Panc1 (cell line): ENCODE measurements at regions of chr16 and their contacts with region 1.

Region 1: DNA sequence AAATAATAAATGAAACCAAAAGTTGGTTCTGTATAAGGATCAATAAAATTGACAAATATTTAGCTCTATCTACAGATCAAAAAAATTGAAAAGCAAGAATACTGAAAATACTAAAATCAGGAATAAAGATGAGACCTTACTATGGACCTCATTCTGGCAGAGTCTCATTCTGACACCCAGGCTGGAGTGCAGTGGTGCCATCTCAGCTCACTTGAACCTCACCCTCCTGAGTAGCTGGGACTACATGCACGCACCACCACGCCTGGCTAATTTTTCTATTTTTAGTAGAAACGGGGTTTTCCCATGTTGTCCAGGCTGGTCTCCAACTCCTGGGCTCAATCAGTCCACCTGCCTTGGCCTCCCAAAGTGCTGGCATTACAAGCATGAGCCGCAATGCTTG is 22.0 kb upstream of the KREMEN2 start:
- DNase-seq: no peak
- ATAC-seq: no peak
- H3K4me3 ChIP-seq: no peak overlapping the region
- H3K27ac ChIP-seq: no peak overlapping the region
- H3K4me1 ChIP-seq: no peaks in the 10 kb centered on the region
- H3K27me3 ChIP-seq: no peaks in the 10 kb centered on the region
- CTCF ChIP-seq: no peak

Region 2: GRCh38 chr16:2919511-2920255 is 22.4 kb before region 1 on chr16:
- CTCF ChIA-PET with region 1: no interaction called
- POLR2A ChIA-PET with region 1: interaction called, 12 read pairs
- in situ Hi-C with region 1: no loop called
- intact Hi-C with region 1: no loop called
- DNase-seq: no peak
- ATAC-seq: peak; percentile 63
- H3K4me3 ChIP-seq: no peak overlapping the region
- H3K27ac ChIP-seq: no peak overlapping the region
- H3K4me1 ChIP-seq: peaks cover 4% of the 10 kb centered on the region; the same call in 1 of the 2 replicates
- H3K27me3 ChIP-seq: no peaks in the 10 kb centered on the region
- CTCF ChIP-seq: peak; percentile 91